ENCODE measurements at regions of chr17 and their contacts with region 1.

Region 1: GRCh38 chr17:75749545-75750389 is 15.2 kb downstream of the GALK1 start:
- DNase-seq: peak; percentile 80 to 88
- ATAC-seq: peak; percentile 80 to 91
- H3K4me3 ChIP-seq: no peak overlapping the region
- H3K27ac ChIP-seq: peak overlapping the region; percentile 43 to 73; a peak in 5 of 6 replicates
- H3K4me1 ChIP-seq: peaks cover 12% of the 10 kb centered on the region
- CTCF ChIP-seq: peak; percentile 97
- EP300 ChIP-seq: no peak
- POLR2A ChIP-seq: no peak
- RAD21 ChIP-seq: peak; percentile 93 to 94

Region 2: GRCh38 chr17:75601057-75602051 is 148.4 kb before region 1 on chr17:
- CTCF ChIA-PET with region 1: interaction called, 42 read pairs
- POLR2A ChIA-PET with region 1: no interaction called
- DNase-seq: peak; percentile 82 to 88
- ATAC-seq: peak; percentile 55 to 87
- H3K4me3 ChIP-seq: no peak overlapping the region
- H3K27ac ChIP-seq: peak overlapping the region; percentile 40 to 64
- H3K4me1 ChIP-seq: peaks cover 43% of the 10 kb centered on the region
- CTCF ChIP-seq: peak; percentile 86
- EP300 ChIP-seq: no peak
- POLR2A ChIP-seq: no peak
- RAD21 ChIP-seq: peak; percentile 62 to 63

Region 3: GRCh38 chr17:75707131-75707571 is 42.6 kb before region 1 on chr17:
- CTCF ChIA-PET with region 1: interaction called, 116 read pairs
- POLR2A ChIA-PET with region 1: interaction called, 4 read pairs
- DNase-seq: peak; percentile 86 to 90
- ATAC-seq: peak; percentile 92 to 93
- H3K4me3 ChIP-seq: no peak overlapping the region
- H3K27ac ChIP-seq: peak overlapping the region; percentile 93
- H3K4me1 ChIP-seq: peaks cover 57% of the 10 kb centered on the region
- CTCF ChIP-seq: no peak
- EP300 ChIP-seq: peak; percentile 62 to 87; a peak in 3 of 5 replicates
- POLR2A ChIP-seq: no peak
- RAD21 ChIP-seq: peak in 1 of 2 experiments; percentile 62; a peak in 4 of 5 replicates

Region 4: DNA sequence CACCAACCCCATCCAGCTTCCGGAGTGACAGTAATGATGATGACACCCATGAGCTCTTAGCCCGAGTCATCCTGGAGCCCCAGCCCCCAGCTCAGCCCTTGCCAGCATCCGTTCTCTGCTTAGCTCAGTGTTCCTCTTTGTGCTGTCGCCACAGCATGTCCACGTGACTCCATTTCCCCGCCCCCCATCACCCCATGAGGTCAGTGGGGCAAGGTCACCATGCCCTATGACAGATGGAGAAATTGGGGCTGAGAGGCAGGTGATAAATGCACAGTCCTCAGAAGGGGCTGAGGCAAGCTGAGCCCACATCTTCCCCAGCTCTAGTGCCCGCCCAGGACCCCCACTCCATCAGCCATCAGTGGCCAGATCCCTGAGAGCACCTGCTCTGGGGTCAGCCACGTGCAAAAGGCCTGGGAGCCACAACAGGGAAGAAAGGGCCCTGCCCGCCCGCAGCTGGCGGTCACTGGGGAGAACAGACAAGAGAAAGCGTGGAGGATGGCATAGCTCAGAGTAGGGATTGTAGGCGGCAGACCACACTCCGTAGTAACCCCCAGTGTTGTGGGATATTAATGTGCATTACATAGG is 11.5 kb before region 1 on chr17:
- CTCF ChIA-PET with region 1: interaction called, 273 read pairs
- POLR2A ChIA-PET with region 1: no interaction called
- DNase-seq: no peak
- ATAC-seq: no peak
- H3K4me3 ChIP-seq: no peak overlapping the region
- H3K27ac ChIP-seq: peak overlapping the region in 1 of 2 experiments; percentile 56; a peak in 2 of 6 replicates
- H3K4me1 ChIP-seq: peaks cover 11% of the 10 kb centered on the region; the same call in 2 of the 3 replicates
- CTCF ChIP-seq: no peak
- EP300 ChIP-seq: no peak
- POLR2A ChIP-seq: no peak
- RAD21 ChIP-seq: no peak

Region 5: DNA sequence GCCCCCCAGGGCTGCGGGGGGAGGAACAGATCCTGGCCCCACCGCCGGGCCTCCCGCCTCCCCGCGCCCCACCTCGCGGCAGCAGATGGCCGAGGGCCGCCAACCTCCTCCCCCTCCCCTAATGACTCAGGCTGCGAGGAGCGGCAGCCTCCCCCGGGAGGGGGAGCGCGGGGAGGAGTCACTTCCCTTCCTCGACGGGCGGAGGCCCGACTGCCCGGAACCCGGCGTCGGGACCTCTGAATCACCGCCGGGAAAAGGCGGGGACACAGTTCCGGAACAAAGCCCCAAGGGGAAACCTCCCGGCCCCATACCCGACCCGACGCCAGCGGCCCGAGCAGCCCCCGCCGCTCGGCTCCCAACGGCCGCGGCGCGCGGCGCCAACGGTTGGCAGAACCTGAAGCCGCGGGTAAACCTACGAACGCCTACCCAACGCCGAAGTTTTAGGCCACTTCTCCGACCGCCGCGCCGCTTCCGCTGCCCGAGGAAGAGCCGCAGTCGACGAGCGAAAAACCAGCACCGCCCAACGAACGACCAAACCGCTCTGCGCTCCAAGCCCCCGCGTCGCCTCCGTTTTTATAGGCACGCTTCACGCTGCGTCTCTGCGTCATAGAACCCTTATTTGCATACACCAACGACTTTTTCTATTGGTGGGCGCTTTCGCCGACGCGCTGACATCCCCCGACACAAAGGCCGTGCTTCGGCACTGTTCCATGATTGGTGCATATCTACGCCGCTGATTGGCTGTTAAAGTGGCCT is 29.6 kb after region 1 on chr17:
- CTCF ChIA-PET with region 1: interaction called, 30 read pairs
- POLR2A ChIA-PET with region 1: interaction called, 11 read pairs
- DNase-seq: peak; percentile 100
- ATAC-seq: peak; percentile 55 to 82
- H3K4me3 ChIP-seq: peak overlapping the region; percentile 69
- H3K27ac ChIP-seq: peak overlapping the region; percentile 93 to 95
- H3K4me1 ChIP-seq: peaks cover 41% of the 10 kb centered on the region
- CTCF ChIP-seq: no peak; the same call in 2 of the 3 replicates
- EP300 ChIP-seq: no peak
- POLR2A ChIP-seq: peak; percentile 100
- RAD21 ChIP-seq: no peak

Region 6: DNA sequence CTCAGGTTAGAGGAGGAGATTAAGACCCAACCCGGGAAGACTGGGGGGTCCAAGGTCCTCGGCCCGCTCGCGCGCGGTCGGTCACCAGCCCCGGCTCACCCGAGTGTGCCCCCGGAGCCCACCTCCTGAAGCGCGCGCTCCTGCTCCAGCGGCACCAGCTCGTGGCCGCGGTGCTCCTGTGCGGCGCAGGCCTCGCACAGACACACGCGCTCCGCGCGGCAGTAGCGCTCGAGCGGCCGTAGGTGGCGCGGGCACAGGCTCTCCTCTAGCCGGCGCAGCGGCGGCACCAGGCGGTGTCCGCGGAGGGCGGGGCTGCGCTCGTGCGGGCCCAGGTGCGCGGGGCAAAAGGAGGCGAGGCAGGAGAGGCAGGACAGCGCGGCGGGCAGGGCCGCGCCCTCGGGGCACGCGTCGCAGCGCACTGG is 128.0 kb after region 1 on chr17:
- CTCF ChIA-PET with region 1: interaction called, 14 read pairs
- POLR2A ChIA-PET with region 1: no interaction called
- DNase-seq: peak in 1 of 2 experiments; percentile 86
- ATAC-seq: peak; percentile 60 to 72
- H3K4me3 ChIP-seq: peak overlapping the region; percentile 85
- H3K27ac ChIP-seq: peak overlapping the region; percentile 92 to 94
- H3K4me1 ChIP-seq: peaks cover 36% of the 10 kb centered on the region
- CTCF ChIP-seq: peak; percentile 37
- EP300 ChIP-seq: no peak
- POLR2A ChIP-seq: peak; percentile 18; the same call in 1 of the 2 replicates
- RAD21 ChIP-seq: no peak; a peak in 1 of 5 replicates

Region 7: DNA sequence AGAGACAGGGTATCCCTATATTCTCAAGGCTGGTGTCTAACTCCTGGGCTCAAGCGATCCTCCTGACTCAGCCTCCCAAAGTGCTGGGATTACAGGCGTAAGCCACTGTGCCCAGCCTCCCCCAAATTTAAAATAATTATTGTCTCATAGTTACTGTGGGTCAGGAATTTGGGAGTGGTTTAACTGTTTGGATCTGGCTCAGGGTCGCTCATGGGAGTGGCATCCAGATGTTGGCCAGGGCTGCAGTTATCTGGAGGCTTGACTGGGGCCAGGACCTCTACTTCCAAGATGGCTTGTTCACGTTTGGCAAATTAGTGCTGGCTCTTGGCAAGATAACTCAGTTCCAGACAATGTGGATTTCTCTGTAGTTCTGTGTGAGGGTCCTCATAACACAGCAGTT is 237.2 kb after region 1 on chr17:
- CTCF ChIA-PET with region 1: no interaction called
- POLR2A ChIA-PET with region 1: no interaction called
- DNase-seq: no peak
- ATAC-seq: no peak
- H3K4me3 ChIP-seq: no peak overlapping the region
- H3K27ac ChIP-seq: no peak overlapping the region
- H3K4me1 ChIP-seq: peaks cover 8% of the 10 kb centered on the region; the same call in 2 of the 3 replicates
- CTCF ChIP-seq: no peak
- EP300 ChIP-seq: no peak
- POLR2A ChIP-seq: no peak
- RAD21 ChIP-seq: no peak